A549 (cell line): ENCODE measurements at regions of chr1 and their contacts with region 1.

Region 1: DNA sequence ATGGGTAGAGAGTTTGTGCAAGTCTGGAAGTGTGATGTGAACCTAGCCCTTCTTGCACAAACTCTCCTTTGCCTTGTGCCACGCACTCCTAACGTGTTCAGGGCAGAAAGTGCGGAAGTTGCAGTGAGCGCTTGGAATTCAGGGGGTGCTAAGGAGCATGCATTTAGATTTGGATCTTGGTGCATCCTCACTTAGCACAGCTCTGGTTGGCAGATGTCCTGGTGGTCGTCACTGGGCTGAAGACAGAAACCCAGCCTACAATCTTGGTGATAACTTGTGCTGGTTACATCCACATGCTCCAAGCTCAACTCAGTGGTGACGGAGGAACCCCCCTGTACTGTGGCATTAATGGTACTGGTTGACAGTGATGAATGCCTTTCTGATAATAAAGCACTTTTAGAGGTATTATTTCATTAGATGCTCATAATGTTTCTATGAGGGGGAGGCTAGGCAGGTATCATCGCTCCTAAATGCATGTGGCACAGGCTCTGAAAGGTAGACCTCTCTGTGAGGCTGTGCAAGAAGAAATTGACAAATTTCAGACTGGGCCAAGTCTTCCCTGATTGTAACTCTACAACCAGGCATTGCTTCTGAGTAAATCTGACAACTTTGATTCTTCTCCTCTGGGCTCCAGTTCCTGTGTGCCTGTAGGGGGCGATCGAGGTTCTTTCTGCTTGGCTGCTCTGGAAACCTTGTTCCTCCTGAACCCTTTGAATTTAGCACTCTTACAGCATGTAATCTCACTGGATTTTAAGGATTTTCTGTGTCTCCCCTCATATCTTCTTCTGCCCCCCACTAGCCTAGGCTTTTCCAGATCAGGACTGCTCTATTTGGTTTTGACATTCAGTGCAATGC is 40.6 kb downstream of the MAPKAPK2 start:
- DNase-seq: peak; percentile 57
- ATAC-seq: peak in 1 of 2 experiments; percentile 44; a peak in 3 of 6 replicates
- H3K4me3 ChIP-seq: no peak overlapping the region
- H3K27ac ChIP-seq: peak overlapping the region; percentile 90 to 92
- H3K4me1 ChIP-seq: peaks cover 62% of the 10 kb centered on the region
- CTCF ChIP-seq: peak; percentile 46; the same call in 2 of the 3 replicates
- EP300 ChIP-seq: no peak
- POLR2A ChIP-seq: no peak
- RAD21 ChIP-seq: peak in 1 of 2 experiments; percentile 36; a peak in 2 of 5 replicates

Region 2: DNA sequence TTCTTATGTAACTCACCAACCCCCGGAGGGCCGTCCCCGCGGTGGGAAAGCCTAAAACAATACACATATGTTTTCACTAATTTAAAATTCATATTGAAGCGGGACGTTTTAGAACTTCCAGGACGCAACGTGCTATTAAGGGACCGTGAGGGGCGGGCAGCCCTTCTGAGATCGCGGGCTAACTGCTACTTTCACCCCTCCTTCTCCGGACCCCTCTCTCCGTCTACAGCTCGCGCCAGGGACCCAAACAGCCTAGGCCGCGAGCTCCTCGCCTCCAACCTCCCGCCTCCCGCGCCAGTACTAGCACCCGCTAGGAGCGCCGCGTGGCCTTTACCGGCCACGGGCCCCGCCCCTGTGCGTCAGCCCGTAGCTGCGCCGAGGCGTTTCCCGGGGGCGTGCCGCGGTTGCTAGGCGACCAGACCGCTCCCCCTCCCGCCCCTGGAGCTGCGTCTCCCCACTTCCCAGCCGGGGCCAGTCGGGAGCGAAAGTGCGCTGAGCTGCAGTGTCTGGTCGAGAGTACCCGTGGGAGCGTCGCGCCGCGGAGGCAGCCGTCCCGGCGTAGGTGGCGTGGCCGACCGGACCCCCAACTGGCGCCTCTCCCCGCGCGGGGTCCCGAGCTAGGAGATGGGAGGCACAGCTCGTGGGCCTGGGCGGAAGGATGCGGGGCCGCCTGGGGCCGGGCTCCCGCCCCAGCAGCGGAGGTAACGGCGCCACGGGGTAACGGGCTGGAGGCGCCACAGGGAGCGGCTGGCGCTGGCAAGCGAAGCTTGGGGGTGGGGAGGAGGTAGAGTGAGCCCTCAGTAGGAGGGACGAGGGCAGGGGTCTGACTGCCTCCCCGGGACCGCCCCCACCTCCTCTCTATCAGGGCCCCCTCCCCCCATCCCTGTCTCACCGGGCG is 90.0 kb before region 1 on chr1 and contains the start of gene DYRK3:
- CTCF ChIA-PET with region 1: interaction called, 16 read pairs
- POLR2A ChIA-PET with region 1: no interaction called
- DNase-seq: peak; percentile 87 to 93
- ATAC-seq: peak; percentile 91 to 95
- H3K4me3 ChIP-seq: peak within 1 kb of the TSS; percentile 91
- H3K27ac ChIP-seq: peak within 1 kb of the TSS; percentile 88 to 89
- H3K4me1 ChIP-seq: peaks cover 32% of the 10 kb centered on the region; the same call in 2 of the 3 replicates
- CTCF ChIP-seq: no peak
- EP300 ChIP-seq: no peak
- POLR2A ChIP-seq: peak; percentile 91
- RAD21 ChIP-seq: no peak; a peak in 1 of 5 replicates
- polyA plus RNA-seq, gene DYRK3: 7.3 and 9.3 TPM in 2 replicates

Region 3: GRCh38 chr1:206658264-206658980 is 66.9 kb before region 1 on chr1:
- CTCF ChIA-PET with region 1: interaction called, 23 read pairs
- POLR2A ChIA-PET with region 1: no interaction called
- DNase-seq: peak; percentile 17 to 81
- ATAC-seq: peak; percentile 74 to 84
- H3K4me3 ChIP-seq: no peak overlapping the region
- H3K27ac ChIP-seq: no peak overlapping the region
- H3K4me1 ChIP-seq: 0 out of 3 replicates have a peak, but pooled peaks cover 2% of the 10 kb centered on the region
- CTCF ChIP-seq: peak; percentile 60
- EP300 ChIP-seq: no peak
- POLR2A ChIP-seq: no peak
- RAD21 ChIP-seq: peak; percentile 43 to 57; a peak in 4 of 5 replicates

Region 4: GRCh38 chr1:206693029-206693428 is 32.3 kb before region 1 on chr1:
- CTCF ChIA-PET with region 1: interaction called, 10 read pairs
- POLR2A ChIA-PET with region 1: no interaction called
- DNase-seq: no peak
- ATAC-seq: peak in 1 of 2 experiments; percentile 28; a peak in 2 of 6 replicates
- H3K4me3 ChIP-seq: no peak overlapping the region
- H3K27ac ChIP-seq: peak overlapping the region in 1 of 2 experiments; percentile 42; a peak in 4 of 6 replicates
- H3K4me1 ChIP-seq: peaks cover 75% of the 10 kb centered on the region
- CTCF ChIP-seq: no peak
- EP300 ChIP-seq: no peak
- POLR2A ChIP-seq: no peak
- RAD21 ChIP-seq: no peak

Region 5: GRCh38 chr1:206706298-206706791 is 19.0 kb before region 1 on chr1:
- CTCF ChIA-PET with region 1: interaction called, 116 read pairs
- POLR2A ChIA-PET with region 1: no interaction called
- DNase-seq: no peak
- ATAC-seq: no peak
- H3K4me3 ChIP-seq: no peak overlapping the region
- H3K27ac ChIP-seq: peak overlapping the region; percentile 30 to 74; a peak in 3 of 6 replicates
- H3K4me1 ChIP-seq: peaks cover 72% of the 10 kb centered on the region
- CTCF ChIP-seq: no peak
- EP300 ChIP-seq: no peak
- POLR2A ChIP-seq: no peak
- RAD21 ChIP-seq: no peak

Region 6: DNA sequence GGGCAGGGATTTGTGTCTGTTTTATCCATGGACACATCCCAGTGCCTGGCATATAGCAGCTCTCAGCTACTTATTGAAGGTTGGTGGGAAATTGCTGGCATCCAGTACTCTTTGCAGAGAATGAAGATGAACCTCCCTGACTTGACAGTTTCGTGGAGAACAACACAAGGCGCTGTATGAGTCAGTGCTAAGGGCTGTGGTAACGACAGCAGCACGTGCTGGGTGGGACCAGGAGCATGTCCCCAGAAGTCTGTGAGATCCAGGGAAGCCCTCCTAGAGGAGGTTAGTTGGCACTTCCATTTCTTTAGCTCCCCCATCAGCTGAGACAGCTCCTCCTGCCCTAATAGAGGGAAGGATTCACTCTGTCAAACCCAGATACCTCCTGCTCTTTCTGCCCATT is 19.3 kb after region 1 on chr1:
- CTCF ChIA-PET with region 1: interaction called, 19 read pairs
- POLR2A ChIA-PET with region 1: no interaction called
- DNase-seq: no peak
- ATAC-seq: peak; percentile 22 to 45; a peak in 3 of 6 replicates
- H3K4me3 ChIP-seq: no peak overlapping the region
- H3K27ac ChIP-seq: no peak overlapping the region
- H3K4me1 ChIP-seq: no peaks in the 10 kb centered on the region
- CTCF ChIP-seq: no peak
- EP300 ChIP-seq: no peak
- POLR2A ChIP-seq: no peak
- RAD21 ChIP-seq: no peak

Region 7: GRCh38 chr1:206826405-206826804 is 101.1 kb after region 1 on chr1:
- CTCF ChIA-PET with region 1: no interaction called
- POLR2A ChIA-PET with region 1: no interaction called
- DNase-seq: no peak
- ATAC-seq: no peak
- H3K4me3 ChIP-seq: no peak overlapping the region
- H3K27ac ChIP-seq: 0 out of 6 replicates have a peak overlapping the region, but pooled peaks of 1 of the 2 experiments have one; percentile 23
- H3K4me1 ChIP-seq: no peaks in the 10 kb centered on the region
- CTCF ChIP-seq: no peak
- EP300 ChIP-seq: no peak
- POLR2A ChIP-seq: no peak
- RAD21 ChIP-seq: no peak

Region 8: DNA sequence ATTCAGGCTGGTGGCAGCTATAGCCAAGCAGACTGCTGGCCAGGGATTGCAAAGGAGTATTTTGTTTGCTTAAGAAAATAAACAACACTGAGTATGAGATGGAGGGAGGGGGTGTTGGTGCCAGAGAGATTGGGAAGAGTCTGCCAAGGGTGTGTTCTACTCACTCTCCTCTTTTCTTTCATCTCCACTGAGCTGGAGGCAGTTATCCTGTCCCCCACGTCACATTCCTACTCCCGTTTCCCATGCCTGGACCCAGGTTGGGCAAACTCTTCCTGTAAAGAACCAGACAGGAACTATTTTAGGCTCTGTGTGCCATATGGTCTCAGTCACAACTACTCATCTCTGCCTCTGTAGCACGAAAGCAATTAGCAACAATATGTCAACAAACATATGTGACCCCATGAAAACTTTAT is 170.5 kb after region 1 on chr1:
- CTCF ChIA-PET with region 1: interaction called, 11 read pairs
- POLR2A ChIA-PET with region 1: no interaction called
- DNase-seq: peak; percentile 23 to 88
- ATAC-seq: peak; percentile 82 to 87
- H3K4me3 ChIP-seq: no peak overlapping the region
- H3K27ac ChIP-seq: peak overlapping the region; percentile 67 to 74
- H3K4me1 ChIP-seq: peaks cover 68% of the 10 kb centered on the region
- CTCF ChIP-seq: no peak
- EP300 ChIP-seq: peak; percentile 69 to 70; a peak in 4 of 5 replicates
- POLR2A ChIP-seq: no peak
- RAD21 ChIP-seq: no peak